ENCODE measurements at regions of chr5 and their contacts with region 1.

Region 1: DNA sequence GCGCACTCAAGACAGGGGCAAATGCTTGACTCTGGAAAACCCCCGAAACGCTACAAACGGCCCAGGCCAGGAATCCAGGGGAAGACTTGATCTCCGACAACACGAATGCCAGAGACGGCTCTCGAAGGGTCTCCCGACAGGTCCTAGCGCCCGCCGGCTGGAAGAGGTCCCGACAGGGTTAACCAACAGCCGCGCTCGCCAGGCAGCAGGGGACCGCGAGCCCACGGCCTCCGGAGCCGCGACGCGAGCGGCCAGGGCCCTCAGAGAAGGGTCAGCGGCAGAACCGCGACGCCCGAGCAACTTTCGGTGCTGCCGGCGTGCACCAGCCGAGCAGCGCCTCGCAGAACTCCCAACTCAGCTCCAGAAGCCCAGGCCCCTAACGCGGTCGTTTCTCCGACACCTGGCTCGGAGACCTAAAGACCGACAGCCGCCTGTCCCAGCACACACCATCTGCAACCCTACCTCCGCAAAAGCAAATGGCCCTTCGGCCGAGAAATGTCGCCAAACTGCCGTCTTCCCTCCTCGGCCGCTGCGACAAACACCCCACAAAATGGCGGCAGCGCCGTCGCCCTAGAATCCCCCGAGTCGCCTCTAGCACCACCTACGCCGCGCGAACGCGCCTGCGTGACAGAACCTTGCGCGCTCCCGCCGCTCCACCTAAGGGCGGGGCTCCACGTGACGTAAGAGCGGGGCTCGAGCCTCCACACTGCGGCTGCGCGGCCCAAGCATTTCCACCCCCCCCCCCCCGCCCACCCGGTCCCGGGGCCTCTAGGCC is at the start of gene CLK4:
- DNase-seq: peak; percentile 99
- H3K4me3 Mint-ChIP-seq: peak within 1 kb of the TSS; percentile 90
- H3K27ac Mint-ChIP-seq: peak within 1 kb of the TSS; percentile 99
- H3K4me1 Mint-ChIP-seq: peaks cover 31% of the 10 kb centered on the region
- H3K27me3 Mint-ChIP-seq: peaks cover 10% of the 10 kb centered on the region
- total RNA-seq, gene CLK4: 26.0 and 26.1 TPM in 2 replicates

Region 2: GRCh38 chr5:178204182-178204894 is 422.3 kb before region 1 on chr5 and contains the start of gene HNRNPAB:
- intact Hi-C with region 1: no loop called
- DNase-seq: peak; percentile 99
- H3K4me3 Mint-ChIP-seq: peak within 1 kb of the TSS; percentile 98
- H3K27ac Mint-ChIP-seq: peak within 1 kb of the TSS; percentile 99
- H3K4me1 Mint-ChIP-seq: peaks cover 26% of the 10 kb centered on the region
- H3K27me3 Mint-ChIP-seq: peaks cover 2% of the 10 kb centered on the region
- total RNA-seq, gene HNRNPAB: 492 and 507 TPM in 2 replicates

Region 3: DNA sequence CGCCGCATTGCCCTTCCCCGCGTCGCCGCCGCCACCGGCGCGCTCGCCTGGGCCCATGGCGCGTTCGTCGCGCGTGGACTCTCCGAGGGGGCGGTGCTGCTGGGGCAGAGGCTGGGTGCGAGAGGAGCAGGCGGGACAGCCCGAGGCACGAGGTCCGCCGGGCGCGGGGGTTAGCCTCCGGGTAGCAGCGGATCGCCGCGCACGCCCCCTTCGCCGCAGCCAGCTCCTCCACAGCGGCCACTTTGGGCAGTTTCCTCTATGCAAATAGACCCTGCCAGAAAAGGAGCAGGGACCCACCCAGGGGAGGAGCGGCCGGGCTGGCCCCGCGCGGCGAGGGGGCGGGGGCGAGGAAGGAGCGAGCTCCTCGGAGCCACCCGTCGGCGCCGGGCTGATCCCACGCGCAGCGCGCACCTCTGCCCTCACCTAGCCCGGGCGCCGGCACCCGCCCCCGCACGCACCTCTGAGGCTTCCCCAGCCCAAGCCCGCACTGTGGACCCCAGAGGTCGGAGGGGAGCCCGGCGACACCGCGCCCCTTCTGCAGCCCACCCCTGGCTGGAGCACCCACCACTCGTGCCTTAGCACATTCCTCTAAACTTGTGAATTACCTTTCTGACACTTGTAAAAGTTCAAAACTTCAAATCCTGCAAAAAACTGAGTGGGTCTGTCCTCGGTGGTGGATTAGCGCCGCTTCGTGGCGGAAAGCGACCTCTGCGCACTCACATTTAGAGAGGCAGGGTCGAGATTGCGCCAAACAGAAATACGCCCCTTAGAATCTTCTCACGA is 36.3 kb before region 1 on chr5 and contains the start of gene COL23A1:
- intact Hi-C with region 1: loop called (anchors 1 kb)
- DNase-seq: peak; percentile 85
- H3K4me3 Mint-ChIP-seq: peak within 1 kb of the TSS; percentile 73
- H3K27ac Mint-ChIP-seq: no peak within 1 kb of the TSS
- H3K4me1 Mint-ChIP-seq: peaks cover 3% of the 10 kb centered on the region
- H3K27me3 Mint-ChIP-seq: peaks cover 51% of the 10 kb centered on the region
- total RNA-seq, gene COL23A1: 0.07 and 0.09 TPM in 2 replicates

Region 4: GRCh38 chr5:178602752-178603151 is 23.9 kb before region 1 on chr5:
- intact Hi-C with region 1: no loop called
- DNase-seq: no peak
- H3K4me3 Mint-ChIP-seq: no peak overlapping the region
- H3K27ac Mint-ChIP-seq: no peak overlapping the region
- H3K4me1 Mint-ChIP-seq: no peaks in the 10 kb centered on the region
- H3K27me3 Mint-ChIP-seq: no peaks in the 10 kb centered on the region

Region 5: GRCh38 chr5:178732281-178732680 is 105.6 kb after region 1 on chr5:
- intact Hi-C with region 1: loop called (anchors 1 kb)
- DNase-seq: no peak
- H3K4me3 Mint-ChIP-seq: no peak overlapping the region
- H3K27ac Mint-ChIP-seq: no peak overlapping the region
- H3K4me1 Mint-ChIP-seq: peaks cover 7% of the 10 kb centered on the region
- H3K27me3 Mint-ChIP-seq: no peaks in the 10 kb centered on the region

Region 6: GRCh38 chr5:179550511-179551230 is 924.0 kb after region 1 on chr5 and contains the start of gene RUFY1:
- intact Hi-C with region 1: loop called (anchors 2 kb)
- DNase-seq: peak; percentile 96
- H3K4me3 Mint-ChIP-seq: peak within 1 kb of the TSS; percentile 97
- H3K27ac Mint-ChIP-seq: peak within 1 kb of the TSS; percentile 99
- H3K4me1 Mint-ChIP-seq: peaks cover 23% of the 10 kb centered on the region
- H3K27me3 Mint-ChIP-seq: peaks cover 2% of the 10 kb centered on the region
- total RNA-seq, gene RUFY1: 38.8 and 40.6 TPM in 2 replicates

Measured in activated CD4-positive, alpha-beta T cell treated with anti-CD3 and anti-CD28 coated beads, Interleukin-2, amount 10 ng/mL, durations not matched to agents 24 days and 14 days (primary cell).